Activated CD4-positive, alpha-beta memory T cell treated with anti-CD3 and anti-CD28 coated beads for 36 hours (primary cell): ENCODE measurements at regions of chr7 and their contacts with region 1.

Region 1: GRCh38 chr7:127874951-127875608 is 156.2 kb downstream of the LRRC4 start:
- DNase-seq: no peak
- H3K4me3 Mint-ChIP-seq: no peak overlapping the region
- H3K27ac Mint-ChIP-seq: no peak overlapping the region
- H3K4me1 Mint-ChIP-seq: peaks cover 23% of the 10 kb centered on the region
- H3K27me3 Mint-ChIP-seq: no peaks in the 10 kb centered on the region

Region 2: GRCh38 chr7:127745445-127745844 is 129.6 kb before region 1 on chr7:
- CTCF ChIA-PET with region 1: no interaction called
- POLR2A ChIA-PET with region 1: no interaction called
- intact Hi-C with region 1: loop called (anchors 1 kb)
- DNase-seq: peak; percentile 11
- H3K4me3 Mint-ChIP-seq: no peak overlapping the region
- H3K27ac Mint-ChIP-seq: peak overlapping the region; percentile 57
- H3K4me1 Mint-ChIP-seq: peaks cover 58% of the 10 kb centered on the region
- H3K27me3 Mint-ChIP-seq: no peaks in the 10 kb centered on the region

Region 3: GRCh38 chr7:127858091-127858914 is 16.8 kb before region 1 on chr7:
- CTCF ChIA-PET with region 1: no interaction called
- POLR2A ChIA-PET with region 1: interaction called, 5 read pairs
- intact Hi-C with region 1: loop called (anchors 1 kb)
- DNase-seq: no peak
- H3K4me3 Mint-ChIP-seq: no peak overlapping the region
- H3K27ac Mint-ChIP-seq: peak overlapping the region; percentile 23
- H3K4me1 Mint-ChIP-seq: peaks cover 60% of the 10 kb centered on the region
- H3K27me3 Mint-ChIP-seq: no peaks in the 10 kb centered on the region

Region 4: GRCh38 chr7:127927348-127927696 is 52.2 kb after region 1 on chr7:
- CTCF ChIA-PET with region 1: no interaction called
- POLR2A ChIA-PET with region 1: no interaction called
- intact Hi-C with region 1: loop called (anchors 1 kb)
- DNase-seq: no peak
- H3K4me3 Mint-ChIP-seq: no peak overlapping the region
- H3K27ac Mint-ChIP-seq: no peak overlapping the region
- H3K4me1 Mint-ChIP-seq: peaks cover 14% of the 10 kb centered on the region
- H3K27me3 Mint-ChIP-seq: no peaks in the 10 kb centered on the region